ENCODE measurements at regions of chr1 and their contacts with region 1.

Region 1: DNA sequence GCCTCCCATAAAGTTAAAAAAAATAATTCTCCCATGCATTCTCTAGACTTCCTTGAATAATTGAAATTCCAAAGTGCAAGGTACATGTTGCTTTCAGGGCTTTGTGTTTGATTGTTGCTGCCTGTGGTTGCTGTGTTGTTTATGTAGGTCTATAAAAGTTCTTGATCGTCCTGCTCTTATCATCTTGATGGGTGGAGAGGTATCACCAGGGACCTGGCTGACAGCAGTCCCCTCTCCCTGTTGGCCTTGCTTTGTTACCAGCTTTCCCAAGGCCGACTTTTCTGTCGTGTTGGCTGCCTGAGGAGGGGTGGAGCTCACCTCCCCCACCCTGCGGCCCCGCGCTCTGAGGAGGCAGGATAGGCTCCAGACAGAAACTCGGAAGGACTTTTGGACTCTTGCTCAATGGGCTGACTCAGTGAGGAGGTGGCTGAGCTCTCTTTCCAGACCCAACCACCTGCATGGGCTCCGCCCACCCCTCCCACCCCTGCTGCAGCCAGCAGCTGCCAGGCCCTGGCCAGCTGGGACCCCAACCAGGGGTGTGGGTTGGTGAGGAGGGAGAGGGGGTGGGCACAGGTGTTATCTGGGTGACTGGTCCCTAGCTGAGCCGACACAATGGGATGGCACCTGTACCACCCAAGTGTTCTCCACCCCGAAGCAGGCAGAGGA is 2.0 kb downstream of the INAVA start:
- DNase-seq: peak; percentile 99
- H3K4me3 Mint-ChIP-seq: peak overlapping the region; percentile 92
- H3K27ac Mint-ChIP-seq: peak overlapping the region; percentile 89
- H3K4me1 Mint-ChIP-seq: peaks cover 62% of the 10 kb centered on the region
- H3K27me3 Mint-ChIP-seq: no peaks in the 10 kb centered on the region
- CTCF ChIP-seq: no peak

Region 2: DNA sequence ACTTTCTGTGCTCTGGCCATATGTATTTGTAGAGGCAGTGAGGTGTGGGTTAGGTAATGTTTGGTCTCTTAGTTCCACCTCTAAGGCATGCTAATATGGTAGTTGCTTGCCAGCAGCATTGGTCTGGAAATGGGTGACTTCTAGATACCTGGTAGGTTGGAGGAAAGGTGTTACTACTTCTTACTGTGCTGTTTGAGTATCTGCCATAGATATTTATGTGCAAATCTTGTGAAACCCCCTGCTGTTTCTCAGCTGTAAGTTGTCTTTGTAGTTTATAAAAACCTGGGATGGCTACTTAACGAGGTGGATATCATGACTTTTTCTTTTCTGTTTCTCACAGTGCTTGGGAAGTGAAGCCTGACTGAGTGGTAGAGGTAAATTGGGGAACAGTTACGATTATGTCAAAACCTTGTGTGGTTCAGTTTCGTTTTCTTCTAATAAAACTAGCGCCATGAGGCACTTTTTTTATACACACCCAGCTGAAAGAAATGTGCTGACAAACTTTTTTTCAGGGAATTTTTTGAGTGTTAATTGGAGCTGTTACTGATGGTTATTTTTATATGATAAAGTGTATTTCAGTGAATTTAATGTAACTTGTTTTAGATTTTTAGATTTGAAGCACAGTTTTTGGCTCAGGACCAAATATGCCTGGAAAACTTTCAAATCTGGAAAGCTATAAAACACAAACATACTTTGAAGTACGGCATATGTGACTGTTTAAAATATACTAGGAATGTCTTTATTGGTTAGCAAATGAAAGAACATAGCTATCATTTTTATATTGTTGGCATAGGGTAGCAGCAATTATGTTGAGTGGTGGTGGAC is 115.9 kb before region 1 on chr1:
- CTCF ChIA-PET with region 1: no interaction called
- POLR2A ChIA-PET with region 1: no interaction called
- intact Hi-C with region 1: no loop called
- DNase-seq: peak; percentile 38
- H3K4me3 Mint-ChIP-seq: peak overlapping the region; percentile 70
- H3K27ac Mint-ChIP-seq: peak overlapping the region; percentile 88
- H3K4me1 Mint-ChIP-seq: peaks cover 41% of the 10 kb centered on the region
- H3K27me3 Mint-ChIP-seq: no peaks in the 10 kb centered on the region
- CTCF ChIP-seq: no peak

Region 3: DNA sequence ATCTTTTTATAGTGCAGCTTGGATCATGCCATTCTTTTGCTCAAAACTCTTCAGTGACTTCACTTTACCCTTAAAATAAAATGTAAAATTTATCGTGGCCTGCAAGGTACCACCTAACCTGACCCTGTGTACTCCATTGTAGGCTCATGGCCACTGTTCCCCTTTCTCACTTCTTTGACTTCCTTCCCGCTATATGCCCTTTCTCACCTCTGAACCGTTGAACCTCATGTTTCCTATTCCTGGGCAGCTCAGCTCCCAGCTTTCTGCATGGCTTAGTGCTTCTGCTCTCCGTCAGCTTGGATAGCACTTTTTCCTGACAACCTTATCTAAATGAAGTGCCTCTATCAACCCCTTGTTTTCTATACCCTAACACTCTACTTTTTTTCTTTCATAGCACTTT is 85.0 kb before region 1 on chr1:
- CTCF ChIA-PET with region 1: no interaction called
- POLR2A ChIA-PET with region 1: no interaction called
- intact Hi-C with region 1: no loop called
- DNase-seq: no peak
- H3K4me3 Mint-ChIP-seq: no peak overlapping the region
- H3K27ac Mint-ChIP-seq: peak overlapping the region; percentile 0
- H3K4me1 Mint-ChIP-seq: peaks cover 17% of the 10 kb centered on the region
- H3K27me3 Mint-ChIP-seq: no peaks in the 10 kb centered on the region
- CTCF ChIP-seq: no peak

Region 4: DNA sequence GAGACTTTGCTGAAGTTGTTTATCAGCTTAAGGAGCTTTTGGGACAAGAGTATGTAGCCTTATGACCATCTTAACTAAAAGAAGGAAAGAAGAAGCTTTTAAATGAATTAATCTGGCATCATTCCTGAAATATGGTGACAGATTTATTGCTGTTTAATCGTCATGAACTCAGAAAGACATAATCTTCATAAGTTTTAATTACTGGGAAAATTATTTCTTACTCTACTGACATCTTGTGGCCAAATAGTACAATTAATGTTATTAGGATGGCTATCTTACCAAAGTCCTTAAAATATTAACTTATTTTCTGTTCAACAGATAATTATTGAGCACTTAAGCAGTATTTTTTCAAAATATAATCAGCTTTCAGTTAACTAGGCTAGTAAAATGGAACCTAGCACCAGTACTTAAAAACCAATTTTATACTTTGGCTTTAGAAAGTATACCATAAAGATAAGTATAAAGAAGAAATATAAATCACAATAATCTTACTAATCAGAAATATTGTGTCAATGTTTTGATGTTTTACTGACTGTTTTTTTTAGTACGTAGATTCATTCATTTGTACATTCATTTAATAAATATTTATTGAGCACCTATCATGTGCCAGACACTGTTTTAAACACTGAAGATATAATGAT is 58.6 kb before region 1 on chr1:
- CTCF ChIA-PET with region 1: interaction called, 7 read pairs
- POLR2A ChIA-PET with region 1: interaction called, 19 read pairs
- intact Hi-C with region 1: no loop called
- DNase-seq: peak; percentile 45
- H3K4me3 Mint-ChIP-seq: no peak overlapping the region
- H3K27ac Mint-ChIP-seq: no peak overlapping the region
- H3K4me1 Mint-ChIP-seq: peaks cover 16% of the 10 kb centered on the region
- H3K27me3 Mint-ChIP-seq: no peaks in the 10 kb centered on the region
- CTCF ChIP-seq: peak; percentile 67

Region 5: GRCh38 chr1:200907611-200908097 is 11.0 kb after region 1 on chr1:
- CTCF ChIA-PET with region 1: interaction called, 16 read pairs
- POLR2A ChIA-PET with region 1: interaction called, 68 read pairs
- intact Hi-C with region 1: no loop called
- DNase-seq: peak; percentile 61
- H3K4me3 Mint-ChIP-seq: no peak overlapping the region
- H3K27ac Mint-ChIP-seq: no peak overlapping the region
- H3K4me1 Mint-ChIP-seq: peaks cover 32% of the 10 kb centered on the region
- H3K27me3 Mint-ChIP-seq: no peaks in the 10 kb centered on the region
- CTCF ChIP-seq: no peak

Region 6: GRCh38 chr1:200917291-200917817 is 20.7 kb after region 1 on chr1:
- CTCF ChIA-PET with region 1: interaction called, 13 read pairs
- POLR2A ChIA-PET with region 1: interaction called, 65 read pairs
- intact Hi-C with region 1: no loop called
- DNase-seq: peak; percentile 98
- H3K4me3 Mint-ChIP-seq: no peak overlapping the region
- H3K27ac Mint-ChIP-seq: peak overlapping the region; percentile 2
- H3K4me1 Mint-ChIP-seq: peaks cover 38% of the 10 kb centered on the region
- H3K27me3 Mint-ChIP-seq: no peaks in the 10 kb centered on the region
- CTCF ChIP-seq: no peak

Measured in MCF 10A (cell line).